ENCODE measurements at regions of chr22 and their contacts with region 1.

Region 1: DNA sequence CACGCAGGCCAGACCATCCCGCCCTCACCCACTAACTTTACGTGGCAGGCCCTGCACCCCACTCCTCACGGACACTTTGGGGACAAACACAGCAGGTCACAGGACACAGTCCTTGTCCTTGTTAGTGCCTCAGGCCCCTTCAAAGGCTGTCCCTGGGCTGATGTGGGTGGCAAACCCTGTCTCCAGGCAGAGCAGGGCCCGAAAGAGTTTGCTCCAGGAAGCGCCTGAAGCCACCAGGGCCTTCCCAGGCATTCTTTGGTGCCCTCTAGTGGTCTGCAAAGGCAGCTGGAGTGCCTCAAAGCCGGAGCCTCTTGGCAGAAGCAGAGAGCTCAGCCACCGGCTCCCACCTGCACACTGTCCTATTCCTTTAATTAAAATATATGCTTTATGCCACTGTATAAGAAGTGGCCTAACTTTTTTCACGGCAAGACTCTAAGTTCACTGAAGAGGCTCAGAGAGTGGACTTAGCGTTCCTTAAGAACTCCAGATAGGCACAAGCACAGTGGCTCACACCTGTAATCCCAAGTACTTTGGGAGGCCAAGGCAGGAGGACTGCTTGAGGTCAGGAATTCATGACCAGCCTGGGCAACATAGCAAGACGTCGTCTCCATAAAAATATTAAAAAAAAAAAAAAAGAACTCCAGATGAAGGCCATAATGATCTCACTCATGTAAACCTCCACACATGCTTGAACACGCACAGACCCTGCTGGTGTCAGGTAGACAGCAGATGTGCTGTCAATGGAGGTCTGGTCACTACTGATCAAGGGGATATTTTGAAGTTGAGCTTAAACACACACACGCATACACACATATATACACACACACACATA is 11.1 kb downstream of the TXN2 start:
- DNase-seq: peak in 1 of 2 donors; percentile 93
- H3K4me3 ChIP-seq: peak overlapping the region in 1 of 2 donors; percentile 26
- H3K27ac ChIP-seq: peak overlapping the region; percentile 96 to 97
- H3K4me1 ChIP-seq: peaks cover 31 to 52% of the 10 kb centered on the region in 2 donors
- H3K27me3 ChIP-seq: no peaks in the 10 kb centered on the region
- CTCF ChIP-seq: peak; percentile 94 to 95 (median 95)

Region 2: DNA sequence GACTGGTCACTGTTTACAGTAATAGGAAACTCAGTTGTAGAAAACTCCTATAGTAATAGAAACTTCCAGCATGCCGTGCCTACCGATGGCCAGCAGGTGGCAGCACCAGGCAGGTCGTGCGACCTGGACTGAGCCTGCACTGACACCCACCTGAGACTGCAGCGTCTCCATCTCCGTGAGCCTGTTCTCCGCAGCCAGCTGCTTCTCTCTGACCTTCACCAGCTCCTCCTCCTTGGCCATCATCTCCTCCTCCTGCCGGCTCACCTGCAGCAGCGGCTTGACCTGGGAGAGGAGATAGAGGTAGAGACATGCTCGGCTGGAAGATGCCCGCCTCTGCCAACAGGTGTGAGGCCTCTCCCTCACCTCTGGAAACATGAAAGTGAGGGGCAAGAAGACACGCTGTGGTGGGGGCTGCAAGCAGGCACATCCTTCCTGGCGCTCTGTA is 169.0 kb before region 1 on chr22:
- intact Hi-C with region 1: loop called (anchors 1 kb)
- DNase-seq: peak in 1 of 2 donors; percentile 85
- H3K4me3 ChIP-seq: no peak overlapping the region
- H3K27ac ChIP-seq: peak overlapping the region; percentile 35 to 48
- H3K4me1 ChIP-seq: no peaks in the 10 kb centered on the region
- H3K27me3 ChIP-seq: no peaks in the 10 kb centered on the region
- CTCF ChIP-seq: peak; percentile 90 to 94 (median 91)

Region 3: GRCh38 chr22:36323182-36323854 is 147.1 kb before region 1 on chr22:
- intact Hi-C with region 1: loop called (anchors 2 kb)
- DNase-seq: peak; percentile 69 to 96
- H3K4me3 ChIP-seq: peak overlapping the region in 1 of 2 donors; percentile 8
- H3K27ac ChIP-seq: peak overlapping the region; percentile 98 to 99
- H3K4me1 ChIP-seq: peaks cover 43 to 72% of the 10 kb centered on the region in 2 donors
- H3K27me3 ChIP-seq: no peaks in the 10 kb centered on the region
- CTCF ChIP-seq: peak in 2 of 3 experiments; percentile 9 to 14